ENCODE measurements at regions of chr1 and their contacts with region 1.

Region 1: GRCh38 chr1:8348777-8349491 is 31.0 kb downstream of the SLC45A1 start:
- DNase-seq: peak; percentile 83
- ATAC-seq: peak; percentile 83
- H3K4me3 Mint-ChIP-seq: no peak overlapping the region
- H3K27ac Mint-ChIP-seq: no peak overlapping the region
- H3K4me1 Mint-ChIP-seq: peaks cover 3% of the 10 kb centered on the region
- H3K27me3 Mint-ChIP-seq: peaks cover 2% of the 10 kb centered on the region

Region 2: GRCh38 chr1:7808253-7808844 is 540.6 kb before region 1 on chr1:
- CTCF ChIA-PET with region 1: no interaction called
- POLR2A ChIA-PET with region 1: no interaction called
- intact Hi-C with region 1: loop called in 1 of 2 experiments (anchors 10 kb)
- DNase-seq: no peak
- ATAC-seq: peak; percentile 70
- H3K4me3 Mint-ChIP-seq: no peak overlapping the region
- H3K27ac Mint-ChIP-seq: no peak overlapping the region
- H3K4me1 Mint-ChIP-seq: no peaks in the 10 kb centered on the region
- H3K27me3 Mint-ChIP-seq: no peaks in the 10 kb centered on the region

Region 3: DNA sequence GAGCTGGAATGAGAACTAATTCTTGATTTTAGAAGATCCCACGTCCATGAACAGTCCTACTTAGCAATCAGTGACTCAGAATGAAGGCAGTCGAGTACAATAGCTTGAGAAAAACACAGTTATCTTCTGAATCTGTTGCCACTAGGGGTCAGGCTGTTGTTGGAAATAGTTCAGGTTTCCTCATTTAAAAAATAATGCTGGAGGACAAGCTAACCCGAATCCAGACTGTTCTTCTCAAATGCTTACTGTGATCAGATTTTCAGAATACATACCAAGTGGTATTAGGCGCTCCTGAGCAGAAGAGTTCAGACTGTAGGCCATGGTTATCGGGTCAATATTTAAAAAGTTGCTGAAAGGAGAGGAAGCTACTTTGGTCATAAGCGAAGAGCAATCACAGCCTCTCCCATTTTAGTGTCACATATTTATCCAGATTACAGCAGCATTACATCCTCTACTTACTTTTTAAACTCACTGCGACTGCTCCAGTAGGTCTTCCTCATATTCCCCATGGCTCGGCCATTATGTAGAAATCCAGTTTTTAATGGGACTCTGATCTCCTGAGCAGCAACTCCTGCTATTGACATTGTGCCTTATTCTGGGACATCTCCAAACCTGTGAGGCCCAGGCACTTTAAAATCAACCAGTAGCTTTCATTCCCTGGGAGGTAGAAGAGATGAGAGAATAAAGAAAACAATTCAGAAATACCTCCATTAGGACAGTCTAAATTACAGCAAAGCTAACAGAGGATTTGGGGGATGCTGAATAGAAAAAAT is 333.7 kb before region 1 on chr1:
- CTCF ChIA-PET with region 1: interaction called, 36 read pairs
- POLR2A ChIA-PET with region 1: no interaction called
- intact Hi-C with region 1: loop called (anchors 1 kb)
- DNase-seq: peak; percentile 51
- ATAC-seq: peak; percentile 83
- H3K4me3 Mint-ChIP-seq: no peak overlapping the region
- H3K27ac Mint-ChIP-seq: no peak overlapping the region
- H3K4me1 Mint-ChIP-seq: peaks cover 2% of the 10 kb centered on the region
- H3K27me3 Mint-ChIP-seq: peaks cover 10% of the 10 kb centered on the region

Region 4: DNA sequence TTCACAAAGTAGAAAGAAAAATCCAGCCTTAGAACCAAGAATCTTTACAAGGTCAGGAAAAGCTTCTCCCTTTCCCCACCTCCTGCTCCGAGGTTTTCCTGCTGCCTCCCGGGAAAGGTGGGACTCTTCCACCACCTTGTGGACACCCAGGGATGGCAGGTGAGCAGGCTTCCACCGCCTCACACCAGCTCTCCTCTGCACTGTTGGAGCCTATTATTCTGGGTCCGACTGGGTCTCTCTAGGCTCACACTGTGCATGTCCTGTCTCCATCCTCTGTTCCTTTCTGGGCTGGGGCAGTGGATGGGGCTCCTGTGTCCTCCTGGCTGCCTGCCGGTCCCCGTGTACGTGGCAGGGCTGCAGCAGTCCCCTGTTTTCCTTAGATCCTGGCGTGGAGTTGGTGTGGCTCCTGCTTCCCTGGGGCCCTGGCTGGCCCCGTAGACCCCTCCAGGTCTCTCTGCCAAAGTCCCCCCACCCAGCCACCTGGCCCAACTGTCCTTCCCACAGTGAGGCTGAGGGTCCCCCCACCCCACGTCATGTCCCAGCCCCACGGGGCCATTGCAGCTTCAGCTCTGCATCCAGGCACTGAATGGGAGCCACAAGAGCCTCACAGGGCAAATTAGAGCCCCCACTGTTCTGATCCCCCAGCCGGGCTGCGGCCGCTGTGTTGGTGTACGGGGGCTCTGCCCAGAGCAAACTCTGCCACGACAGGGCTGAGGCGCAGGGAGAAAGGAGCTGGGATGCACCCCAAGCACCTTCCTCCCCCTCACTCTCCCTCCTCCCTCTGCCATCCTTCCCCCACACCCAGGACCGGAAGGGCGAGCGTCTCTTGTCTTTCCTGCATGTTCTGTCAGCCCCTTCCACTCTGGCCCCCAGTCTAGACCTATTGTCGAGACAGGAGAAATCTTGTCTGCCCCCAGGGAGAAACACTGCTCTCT is 34.3 kb before region 1 on chr1:
- CTCF ChIA-PET with region 1: interaction called, 9 read pairs
- POLR2A ChIA-PET with region 1: no interaction called
- intact Hi-C with region 1: loop called in 1 of 2 experiments (anchors 2 kb)
- DNase-seq: peak; percentile 73
- ATAC-seq: peak; percentile 51
- H3K4me3 Mint-ChIP-seq: no peak overlapping the region
- H3K27ac Mint-ChIP-seq: no peak overlapping the region
- H3K4me1 Mint-ChIP-seq: peaks cover 12% of the 10 kb centered on the region
- H3K27me3 Mint-ChIP-seq: peaks cover 27% of the 10 kb centered on the region

Region 5: DNA sequence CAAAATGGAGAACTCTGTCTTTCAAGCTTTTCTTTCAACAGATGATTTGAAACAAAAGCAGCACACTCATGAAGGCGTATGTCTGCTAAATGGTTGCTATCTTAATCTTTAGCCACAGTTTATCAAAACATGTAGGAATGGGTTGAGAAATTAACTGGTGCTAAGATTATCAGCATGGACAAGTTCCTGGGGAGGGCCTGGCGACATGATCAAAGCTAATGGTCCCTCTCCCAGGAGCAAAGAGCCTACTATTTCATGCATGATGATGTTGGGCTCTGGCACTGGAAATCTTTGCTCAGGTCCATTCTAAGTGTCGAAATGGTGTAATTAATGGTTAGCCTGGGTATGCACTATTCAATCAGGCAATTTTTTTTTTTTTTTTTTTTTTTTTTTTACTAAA is 60.7 kb after region 1 on chr1:
- CTCF ChIA-PET with region 1: no interaction called
- POLR2A ChIA-PET with region 1: no interaction called
- intact Hi-C with region 1: no loop called
- DNase-seq: no peak
- ATAC-seq: no peak
- H3K4me3 Mint-ChIP-seq: no peak overlapping the region
- H3K27ac Mint-ChIP-seq: peak overlapping the region; percentile 77
- H3K4me1 Mint-ChIP-seq: peaks cover 58% of the 10 kb centered on the region
- H3K27me3 Mint-ChIP-seq: no peaks in the 10 kb centered on the region